Dendritic cell treated with granulocyte-macrophage colony-stimulating factor and Interleukin-4, amounts not matched to agents 40 ng/mL and 50 ng/mL, for 4 days (primary cell): ENCODE measurements at regions of chr3 and their contacts with region 1.

Region 1: GRCh38 chr3:128736601-128737000 is 10.6 kb downstream of the RAB7A start:
- H3K4me3 Mint-ChIP-seq: no peak overlapping the region
- H3K27ac Mint-ChIP-seq: no peak overlapping the region
- H3K4me1 Mint-ChIP-seq: peaks cover 57% of the 10 kb centered on the region
- H3K27me3 Mint-ChIP-seq: no peaks in the 10 kb centered on the region

Region 2: DNA sequence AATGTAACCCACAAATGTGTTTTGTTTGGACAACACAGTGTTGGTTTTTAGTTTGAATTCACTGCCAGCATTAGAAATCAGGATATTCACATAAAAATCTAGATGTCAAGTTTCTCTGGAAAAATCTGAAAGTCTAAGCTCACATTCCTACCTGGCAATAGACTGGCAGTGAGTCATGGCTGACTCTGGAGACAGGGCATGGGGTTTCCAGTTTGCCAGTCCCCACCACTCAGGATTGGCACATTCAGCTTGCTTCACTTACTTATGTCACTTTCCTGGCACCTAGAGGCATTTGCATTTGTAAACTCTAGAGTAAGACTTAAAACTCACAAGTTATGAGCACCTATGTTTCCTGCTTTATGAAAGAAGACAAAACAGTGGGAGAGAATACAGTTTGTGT is 703.5 kb before region 1 on chr3:
- intact Hi-C with region 1: no loop called
- H3K4me3 Mint-ChIP-seq: no peak overlapping the region
- H3K27ac Mint-ChIP-seq: no peak overlapping the region
- H3K4me1 Mint-ChIP-seq: no peaks in the 10 kb centered on the region
- H3K27me3 Mint-ChIP-seq: peaks cover 18% of the 10 kb centered on the region

Region 3: DNA sequence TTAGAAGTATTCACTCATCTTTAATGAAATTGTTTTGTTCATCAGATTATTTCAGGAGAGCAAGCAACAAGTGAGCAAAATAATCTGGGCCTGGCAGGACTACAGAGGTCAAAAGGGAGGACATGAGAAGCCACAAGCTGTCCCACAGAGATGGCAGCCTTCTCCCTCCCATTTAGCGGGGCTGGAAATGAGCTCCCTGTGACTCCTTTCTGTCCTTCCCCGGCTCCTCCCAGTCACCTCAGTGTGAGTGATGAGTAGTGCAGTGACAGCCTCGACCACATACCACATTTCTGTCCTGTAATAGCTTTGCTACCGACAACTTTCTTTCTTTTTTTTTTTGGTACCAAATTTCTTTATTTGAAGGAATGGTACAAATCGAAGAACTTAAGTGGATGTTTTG is 27.4 kb after region 1 on chr3:
- intact Hi-C with region 1: no loop called
- H3K4me3 Mint-ChIP-seq: no peak overlapping the region
- H3K27ac Mint-ChIP-seq: no peak overlapping the region
- H3K4me1 Mint-ChIP-seq: peaks cover 79% of the 10 kb centered on the region
- H3K27me3 Mint-ChIP-seq: no peaks in the 10 kb centered on the region

Region 4: GRCh38 chr3:128787256-128788240 is 50.9 kb after region 1 on chr3:
- intact Hi-C with region 1: loop called (anchors 5 kb)
- H3K4me3 Mint-ChIP-seq: no peak overlapping the region
- H3K27ac Mint-ChIP-seq: peak overlapping the region; percentile 50
- H3K4me1 Mint-ChIP-seq: peaks cover 89% of the 10 kb centered on the region
- H3K27me3 Mint-ChIP-seq: no peaks in the 10 kb centered on the region

Region 5: GRCh38 chr3:128804017-128804810 is 67.6 kb after region 1 on chr3:
- intact Hi-C with region 1: no loop called
- H3K4me3 Mint-ChIP-seq: no peak overlapping the region
- H3K27ac Mint-ChIP-seq: peak overlapping the region; percentile 80
- H3K4me1 Mint-ChIP-seq: peaks cover 97% of the 10 kb centered on the region
- H3K27me3 Mint-ChIP-seq: no peaks in the 10 kb centered on the region